GM10248 (cell line): ENCODE measurements at regions of chr12 and their contacts with region 1.

Region 1: DNA sequence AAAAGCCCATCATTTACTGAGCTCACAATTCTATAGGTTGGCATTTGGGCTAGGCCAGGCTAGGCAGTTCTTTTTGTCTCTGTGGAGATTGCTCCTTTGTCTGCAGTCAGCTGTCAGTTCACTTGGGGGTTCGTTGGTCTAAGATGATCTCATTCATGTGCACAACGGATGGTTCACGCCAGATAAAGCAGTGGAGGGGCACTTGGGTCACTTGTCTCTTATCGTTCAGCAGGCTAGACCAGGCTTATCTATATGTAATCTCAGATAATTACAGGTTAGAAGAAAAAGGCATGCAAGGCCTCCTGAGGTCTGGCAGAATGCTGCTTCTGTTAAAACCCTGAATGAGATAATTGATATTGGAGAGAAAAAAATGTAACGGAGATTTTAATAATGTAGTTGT is 119.0 kb upstream of the ATP2B1 start:
- DNase-seq: no peak
- CTCF ChIP-seq: no peak

Region 2: GRCh38 chr12:89840162-89840922 is 12.8 kb after region 1 on chr12:
- CTCF ChIA-PET with region 1: interaction called, 15 read pairs
- POLR2A ChIA-PET with region 1: no interaction called
- DNase-seq: no peak
- CTCF ChIP-seq: no peak

Region 3: GRCh38 chr12:89999699-90000505 is 172.3 kb after region 1 on chr12:
- CTCF ChIA-PET with region 1: no interaction called
- POLR2A ChIA-PET with region 1: no interaction called
- DNase-seq: no peak
- CTCF ChIP-seq: no peak